ENCODE measurements at regions of chr2 and their contacts with region 1.

Region 1: GRCh38 chr2:41859615-41860520 is 188.0 kb upstream of the PKDCC start:
- DNase-seq: peak; percentile 48 to 86
- ATAC-seq: peak; percentile 83 to 96
- H3K4me3 ChIP-seq: no peak overlapping the region
- H3K27ac ChIP-seq: peak overlapping the region; percentile 69 to 86
- H3K4me1 ChIP-seq: peaks cover 25% of the 10 kb centered on the region
- CTCF ChIP-seq: no peak
- EP300 ChIP-seq: peak; percentile 25 to 53; a peak in 2 of 5 replicates
- POLR2A ChIP-seq: no peak
- RAD21 ChIP-seq: peak; percentile 15; a peak in 1 of 5 replicates

Region 2: GRCh38 chr2:41847744-41848441 is 12.0 kb before region 1 on chr2:
- CTCF ChIA-PET with region 1: interaction called, 393 read pairs
- POLR2A ChIA-PET with region 1: interaction called, 4 read pairs
- DNase-seq: peak in 1 of 2 experiments; percentile 89
- ATAC-seq: peak; percentile 73 to 89
- H3K4me3 ChIP-seq: no peak overlapping the region
- H3K27ac ChIP-seq: peak overlapping the region; percentile 67 to 75
- H3K4me1 ChIP-seq: peaks cover 37% of the 10 kb centered on the region
- CTCF ChIP-seq: no peak
- EP300 ChIP-seq: peak; percentile 89 to 92; a peak in 4 of 5 replicates
- POLR2A ChIP-seq: no peak
- RAD21 ChIP-seq: peak in 1 of 2 experiments; percentile 37; a peak in 2 of 5 replicates

Region 3: DNA sequence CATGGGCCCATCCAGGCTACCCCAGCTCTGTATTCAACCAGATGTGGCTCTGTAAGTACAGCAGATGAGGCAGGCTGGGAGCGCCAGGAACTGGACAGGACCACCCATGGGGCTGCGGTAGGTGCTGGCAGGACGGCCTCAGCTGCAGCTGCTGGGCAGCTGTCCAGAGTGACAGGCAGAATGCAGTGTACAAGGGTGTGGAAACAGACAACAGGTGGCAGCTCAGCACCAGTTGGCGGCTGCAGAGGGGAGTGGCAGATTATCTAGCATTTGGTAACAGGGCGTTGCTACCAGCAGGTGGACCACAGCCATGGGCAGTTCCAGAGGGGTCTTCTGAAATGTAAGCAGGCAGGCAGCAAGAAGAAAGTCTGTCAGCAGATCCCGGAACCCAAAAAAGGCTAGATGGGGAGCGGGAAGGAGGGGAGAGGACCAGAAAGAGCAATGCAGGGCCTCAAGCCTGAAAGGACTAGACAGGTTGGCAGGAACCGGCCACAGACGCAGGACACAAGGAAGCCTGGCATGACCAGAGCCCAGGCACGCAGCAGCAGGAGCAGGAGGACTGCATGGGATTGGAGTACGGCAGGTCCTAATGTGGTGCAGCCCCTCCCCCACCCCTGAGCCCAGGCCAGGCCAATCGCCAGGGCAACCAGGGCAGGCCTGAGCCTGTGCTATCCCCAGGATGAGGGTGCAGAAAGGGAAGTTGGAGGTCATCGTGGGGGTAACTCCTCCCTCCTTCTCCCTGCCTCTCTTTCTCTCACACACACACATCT is 212.7 kb after region 1 on chr2:
- CTCF ChIA-PET with region 1: interaction called, 761 read pairs
- POLR2A ChIA-PET with region 1: no interaction called
- DNase-seq: no peak
- ATAC-seq: peak; percentile 36 to 56; a peak in 4 of 6 replicates
- H3K4me3 ChIP-seq: no peak overlapping the region
- H3K27ac ChIP-seq: peak overlapping the region in 1 of 2 experiments; percentile 9; a peak in 4 of 6 replicates
- H3K4me1 ChIP-seq: peaks cover 17% of the 10 kb centered on the region; the same call in 2 of the 3 replicates
- CTCF ChIP-seq: no peak
- EP300 ChIP-seq: no peak
- POLR2A ChIP-seq: no peak
- RAD21 ChIP-seq: peak in 1 of 2 experiments; percentile 25; a peak in 1 of 5 replicates